Mammary epithelial cell (primary cell): ENCODE measurements at regions of chr4 and their contacts with region 1.

Region 1: DNA sequence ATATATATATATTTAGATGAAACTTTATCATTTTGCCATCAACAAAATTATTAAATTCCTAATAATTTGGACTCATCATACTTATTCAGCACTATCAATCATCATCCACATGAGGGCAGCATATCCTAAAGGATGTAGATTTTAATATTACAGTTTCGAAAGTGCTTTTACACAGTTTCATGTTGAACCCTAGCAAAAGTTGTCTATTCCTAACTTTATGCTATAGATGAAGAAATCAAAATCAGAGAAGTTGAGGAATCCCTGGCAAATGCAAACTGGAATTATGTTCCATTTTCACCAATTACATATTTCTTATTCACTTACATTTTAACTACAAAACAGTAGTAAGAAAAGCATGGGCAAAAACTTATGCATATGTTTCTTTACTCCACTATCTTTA is 36.6 kb upstream of the UGT2A1 start:
- DNase-seq: peak; percentile 14
- H3K4me3 ChIP-seq: no peak overlapping the region
- H3K27ac ChIP-seq: no peak overlapping the region
- H3K4me1 ChIP-seq: no peaks in the 10 kb centered on the region
- H3K27me3 ChIP-seq: no peaks in the 10 kb centered on the region
- CTCF ChIP-seq: peak; percentile 55 to 62

Region 2: DNA sequence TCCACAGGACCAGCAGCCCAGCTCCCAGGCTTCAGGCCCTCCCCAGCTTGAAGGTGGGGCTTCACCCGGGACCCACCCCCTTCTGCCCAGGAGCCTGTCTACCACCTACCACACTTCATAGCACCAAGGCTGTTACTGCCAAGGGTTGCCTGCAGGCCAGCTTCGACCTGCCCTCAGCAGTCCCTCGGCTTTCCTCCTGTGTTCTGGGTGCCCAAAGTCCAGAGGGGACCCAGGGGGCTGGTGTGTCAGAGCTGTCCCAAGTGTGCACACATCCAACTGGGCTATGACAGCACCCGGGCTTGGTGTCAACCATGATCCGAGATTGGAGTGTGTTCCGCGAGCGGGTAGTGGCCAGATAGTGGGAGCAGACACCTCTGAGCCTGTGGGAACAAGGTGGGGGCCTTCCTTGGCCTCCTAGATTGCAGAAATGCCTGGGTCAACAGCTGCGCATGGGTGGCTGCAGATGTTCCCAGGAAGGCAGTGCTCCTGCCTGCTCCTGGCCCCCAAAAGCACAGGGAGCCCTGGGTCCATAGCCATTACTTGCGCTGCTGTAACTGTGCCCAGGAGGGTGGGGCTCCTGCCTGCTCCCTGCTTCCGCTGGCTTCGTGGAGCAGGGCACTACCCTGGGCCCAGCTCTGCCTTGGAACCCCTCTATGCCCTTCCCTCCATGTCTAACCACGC is 54.0 kb after region 1 on chr4:
- CTCF ChIA-PET with region 1: no interaction called
- dilution Hi-C with region 1: no loop called
- in situ Hi-C with region 1: no loop called
- intact Hi-C with region 1: no loop called
- DNase-seq: no peak
- H3K4me3 ChIP-seq: no peak overlapping the region
- H3K27ac ChIP-seq: no peak overlapping the region
- H3K4me1 ChIP-seq: peaks cover 12% of the 10 kb centered on the region
- H3K27me3 ChIP-seq: no peaks in the 10 kb centered on the region
- CTCF ChIP-seq: no peak

Region 3: DNA sequence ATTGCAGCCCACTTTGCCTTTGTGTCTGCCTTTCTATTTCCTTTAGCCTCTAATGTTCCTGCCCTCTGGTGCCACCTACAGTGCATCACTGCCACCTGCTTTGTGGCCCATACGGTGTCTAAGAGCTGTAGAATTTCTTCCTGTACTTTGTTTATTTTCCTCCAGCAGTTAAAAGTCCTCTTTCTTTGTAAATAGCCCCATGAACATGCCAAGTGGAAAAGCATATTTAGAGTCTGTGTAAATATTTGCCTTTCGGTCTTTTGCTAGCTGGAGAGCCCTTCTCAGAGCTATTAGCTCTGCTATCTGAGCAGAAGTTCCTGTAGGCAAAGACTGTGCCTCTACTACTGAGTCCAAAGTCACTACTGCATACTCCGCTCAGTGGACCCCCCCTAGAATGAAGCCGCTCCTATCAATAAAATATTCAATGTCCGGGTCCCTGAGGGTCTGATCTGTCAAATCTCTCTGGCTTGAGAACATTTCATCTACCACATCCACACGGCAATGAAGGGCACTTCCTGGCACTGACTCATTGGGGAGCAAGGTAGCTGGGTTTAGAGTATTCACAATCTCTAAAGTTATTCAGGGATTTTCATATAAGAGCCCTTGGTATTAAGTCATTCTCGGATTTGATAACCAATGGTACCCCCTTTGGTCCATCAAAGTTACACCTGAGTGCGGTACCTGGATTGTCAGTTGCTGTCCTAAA is 134.0 kb after region 1 on chr4:
- CTCF ChIA-PET with region 1: no interaction called
- dilution Hi-C with region 1: no loop called
- in situ Hi-C with region 1: loop called (anchors 10 to 25 kb)
- intact Hi-C with region 1: loop called (anchors 1 kb)
- DNase-seq: peak; percentile 34
- H3K4me3 ChIP-seq: no peak overlapping the region
- H3K27ac ChIP-seq: no peak overlapping the region
- H3K4me1 ChIP-seq: no peaks in the 10 kb centered on the region
- H3K27me3 ChIP-seq: no peaks in the 10 kb centered on the region
- CTCF ChIP-seq: peak; percentile 76 to 88

Region 4: DNA sequence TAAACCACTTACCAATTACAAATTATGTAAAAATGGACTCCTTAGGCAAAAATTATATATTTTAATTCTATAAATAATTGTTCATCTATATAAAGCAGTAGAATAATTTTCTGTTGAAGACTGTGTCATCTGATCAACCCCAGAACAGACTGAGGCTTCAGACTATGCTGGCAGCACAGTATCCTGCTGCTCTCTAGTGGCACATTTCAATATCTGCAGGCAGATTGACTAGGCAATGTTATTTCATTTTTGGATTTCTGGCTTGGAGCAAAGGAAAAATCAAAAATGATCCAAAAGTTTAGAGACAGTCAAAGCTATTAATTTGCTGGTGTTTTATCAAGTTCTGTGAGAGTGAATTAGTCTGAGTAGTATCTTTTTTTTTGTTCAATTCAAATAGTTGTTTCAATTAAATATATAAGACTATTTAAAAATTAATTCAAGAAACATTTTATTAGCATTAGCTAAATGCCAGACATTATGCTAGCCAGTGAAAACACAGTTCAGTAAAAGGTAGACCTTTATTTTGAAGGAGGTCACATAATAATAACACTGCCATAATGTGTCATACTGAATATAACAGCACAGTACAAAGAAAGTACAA is 191.7 kb after region 1 on chr4:
- CTCF ChIA-PET with region 1: no interaction called
- dilution Hi-C with region 1: no loop called
- in situ Hi-C with region 1: loop called in 1 of 2 experiments (anchors 5 kb)
- intact Hi-C with region 1: loop called (anchors 1 kb)
- DNase-seq: peak; percentile 27
- H3K4me3 ChIP-seq: no peak overlapping the region
- H3K27ac ChIP-seq: no peak overlapping the region
- H3K4me1 ChIP-seq: no peaks in the 10 kb centered on the region
- H3K27me3 ChIP-seq: no peaks in the 10 kb centered on the region
- CTCF ChIP-seq: peak; percentile 92 to 93

Region 5: GRCh38 chr4:70080205-70080604 is 390.6 kb after region 1 on chr4:
- CTCF ChIA-PET with region 1: no interaction called
- dilution Hi-C with region 1: no loop called
- in situ Hi-C with region 1: no loop called
- intact Hi-C with region 1: loop called (anchors 5 kb)
- DNase-seq: no peak
- H3K4me3 ChIP-seq: no peak overlapping the region
- H3K27ac ChIP-seq: no peak overlapping the region
- H3K4me1 ChIP-seq: no peaks in the 10 kb centered on the region
- H3K27me3 ChIP-seq: no peaks in the 10 kb centered on the region
- CTCF ChIP-seq: no peak

Region 6: DNA sequence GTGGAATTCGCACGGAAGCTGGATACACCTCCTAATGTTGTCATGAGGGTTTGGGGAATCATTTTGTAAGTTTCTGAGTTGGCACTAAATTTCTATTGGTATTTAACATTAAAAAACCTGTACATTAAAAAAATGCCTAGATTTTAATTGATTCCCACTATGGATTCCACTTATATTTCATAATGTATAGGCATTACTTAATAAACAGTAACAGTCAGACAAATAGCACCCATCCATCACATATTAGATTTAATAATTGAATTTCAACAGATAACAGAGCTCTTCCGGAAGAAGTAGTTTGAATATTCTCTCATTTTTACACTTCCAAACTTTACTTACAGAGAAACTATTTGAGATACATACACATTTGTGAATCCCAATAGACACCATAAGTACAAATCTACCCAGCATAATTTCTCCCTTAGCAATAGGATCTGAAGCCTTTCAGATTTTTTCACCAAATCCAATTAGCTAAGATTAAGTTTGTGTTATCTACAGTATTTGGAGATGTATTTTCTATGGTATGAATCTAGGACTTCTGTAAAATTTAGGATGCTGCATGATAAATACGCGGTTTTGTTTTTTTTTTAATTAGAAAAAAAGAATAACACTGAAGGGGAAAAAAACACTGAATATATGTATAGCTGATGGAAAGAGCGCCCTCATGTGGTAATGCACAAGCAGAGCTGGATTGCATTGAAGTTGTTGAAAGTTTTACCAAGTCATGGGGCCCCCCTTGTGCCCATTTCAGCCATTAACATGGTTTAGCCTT is 493.8 kb after region 1 on chr4:
- CTCF ChIA-PET with region 1: no interaction called
- dilution Hi-C with region 1: no loop called
- in situ Hi-C with region 1: loop called (anchors 25 kb)
- intact Hi-C with region 1: loop called (anchors 1 kb)
- DNase-seq: peak; percentile 10
- H3K4me3 ChIP-seq: no peak overlapping the region
- H3K27ac ChIP-seq: no peak overlapping the region
- H3K4me1 ChIP-seq: no peaks in the 10 kb centered on the region
- H3K27me3 ChIP-seq: peaks cover 4% of the 10 kb centered on the region
- CTCF ChIP-seq: peak; percentile 83 to 84

Region 7: DNA sequence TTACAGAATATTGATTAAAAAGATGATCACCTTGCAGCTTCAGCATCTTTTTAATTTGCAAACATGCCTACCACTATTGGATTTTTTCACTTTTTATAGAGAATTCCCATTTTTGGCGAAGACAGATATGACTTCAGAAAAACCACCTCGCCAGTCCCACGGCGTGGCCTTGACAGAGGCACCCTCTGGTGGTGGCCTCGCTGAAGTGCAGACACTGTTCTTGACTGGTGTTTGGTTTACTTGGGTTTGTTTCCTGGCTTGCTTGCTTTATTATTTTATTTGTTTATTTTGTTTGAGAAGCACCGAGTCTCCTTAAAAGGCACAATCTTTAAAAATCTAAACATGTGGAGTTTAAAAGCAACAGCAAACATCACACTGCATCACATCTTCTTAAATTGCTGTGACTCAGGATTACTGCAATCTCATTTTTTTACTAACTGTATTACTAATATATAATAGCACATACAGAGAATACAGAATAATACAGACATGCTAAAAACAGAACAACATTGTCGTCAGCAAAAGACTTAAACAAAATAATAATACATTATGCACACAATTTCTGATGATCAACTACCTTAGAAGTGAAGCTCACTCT is 815.7 kb after region 1 on chr4:
- CTCF ChIA-PET with region 1: no interaction called
- dilution Hi-C with region 1: no loop called
- in situ Hi-C with region 1: loop called in 1 of 2 experiments (anchors 25 kb)
- intact Hi-C with region 1: loop called (anchors 1 kb)
- DNase-seq: peak; percentile 26
- H3K4me3 ChIP-seq: no peak overlapping the region
- H3K27ac ChIP-seq: no peak overlapping the region
- H3K4me1 ChIP-seq: no peaks in the 10 kb centered on the region
- H3K27me3 ChIP-seq: peaks cover 2% of the 10 kb centered on the region
- CTCF ChIP-seq: peak; percentile 97 to 99

Region 8: GRCh38 chr4:70544279-70544868 is 854.8 kb after region 1 on chr4:
- CTCF ChIA-PET with region 1: no interaction called
- dilution Hi-C with region 1: no loop called
- in situ Hi-C with region 1: loop called in 1 of 2 experiments (anchors 25 kb)
- intact Hi-C with region 1: no loop called
- DNase-seq: peak; percentile 22
- H3K4me3 ChIP-seq: no peak overlapping the region
- H3K27ac ChIP-seq: no peak overlapping the region
- H3K4me1 ChIP-seq: no peaks in the 10 kb centered on the region
- H3K27me3 ChIP-seq: no peaks in the 10 kb centered on the region
- CTCF ChIP-seq: peak; percentile 59 to 75